Aorta (tissue), 5 donors: ENCODE measurements at regions of chr1 and their contacts with region 1.

Region 1: GRCh38 chr1:23403735-23404486 is 20.6 kb downstream of the TCEA3 start:
- DNase-seq: peak; percentile 92 to 96
- ATAC-seq: peak; percentile 89
- H3K4me3 ChIP-seq: no peak overlapping the region
- H3K27ac ChIP-seq: peak overlapping the region in 1 of 2 donors; percentile 14
- H3K4me1 ChIP-seq: no peaks in the 10 kb centered on the region
- H3K27me3 ChIP-seq: no peaks in the 10 kb centered on the region

Region 2: GRCh38 chr1:23367791-23368561 is 35.9 kb before region 1 on chr1:
- intact Hi-C with region 1: loop called in 1 of 2 experiments (anchors 5 kb)
- DNase-seq: peak; percentile 99
- ATAC-seq: peak; percentile 97
- H3K4me3 ChIP-seq: peak overlapping the region; percentile 60 to 75
- H3K27ac ChIP-seq: peak overlapping the region in 1 of 2 donors; percentile 93
- H3K4me1 ChIP-seq: peaks cover 0 to 4% of the 10 kb centered on the region in 2 donors
- H3K27me3 ChIP-seq: no peaks in the 10 kb centered on the region